ENCODE measurements at regions of chr2 and their contacts with region 1.

Region 1: GRCh38 chr2:239934571-239935171 is 90.5 kb downstream of the NDUFA10 start:
- DNase-seq: peak; percentile 72
- ATAC-seq: peak; percentile 80

Region 2: GRCh38 chr2:239991689-239992314 is 57.1 kb after region 1 on chr2:
- intact Hi-C with region 1: loop called (anchors 10 kb)
- DNase-seq: no peak
- ATAC-seq: peak; percentile 60

Region 3: DNA sequence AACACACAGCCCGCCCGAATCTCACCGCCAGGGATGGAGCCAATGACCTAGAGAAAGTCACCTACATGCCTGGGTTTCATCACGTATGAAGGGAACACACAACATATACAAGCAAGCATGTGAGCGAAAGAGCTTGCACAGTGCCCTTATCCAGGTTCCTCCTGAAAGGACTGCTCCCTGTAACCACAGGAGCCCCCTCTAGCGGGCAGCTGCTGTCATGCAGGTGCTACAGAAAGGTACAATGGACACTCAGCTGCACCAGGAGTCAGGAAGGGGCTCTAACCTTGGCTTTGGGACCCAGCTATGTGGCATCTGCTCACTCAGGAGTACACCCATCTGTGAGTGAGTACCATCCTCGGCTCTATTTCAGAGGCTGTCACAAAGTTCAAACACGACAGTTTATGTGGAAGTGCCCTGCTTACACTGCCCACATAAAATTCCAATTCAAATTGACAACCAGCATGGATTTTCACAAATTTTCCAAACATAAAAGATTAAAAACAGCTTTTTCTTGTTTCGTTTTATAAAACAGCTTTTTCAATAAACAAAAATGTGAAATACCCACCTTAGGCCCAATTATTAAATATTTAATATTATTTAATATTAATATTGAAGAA is 86.9 kb after region 1 on chr2:
- intact Hi-C with region 1: no loop called
- DNase-seq: peak; percentile 76
- ATAC-seq: peak; percentile 13

Measured in left ventricle myocardium superior (tissue), 1 donor.